GM12878 (cell line): ENCODE measurements at regions of chr9 and their contacts with region 1.

Region 1: GRCh38 chr9:37371565-37372464 is 50.7 kb upstream of the GRHPR start:
- DNase-seq: peak; percentile 63
- ATAC-seq: peak; percentile 44
- H3K4me3 ChIP-seq: no peak overlapping the region
- H3K27ac ChIP-seq: peak overlapping the region; percentile 97
- H3K4me1 ChIP-seq: peaks cover 78% of the 10 kb centered on the region
- H3K27me3 ChIP-seq: no peaks in the 10 kb centered on the region
- CTCF ChIP-seq: no peak
- EP300 ChIP-seq: peak in 1 of 2 experiments; percentile 33; a peak in 2 of 4 replicates
- POLR2A ChIP-seq: peak; percentile 7; the same call in 1 of the 2 replicates
- RAD21 ChIP-seq: no peak

Region 2: GRCh38 chr9:37085233-37085632 is 286.6 kb before region 1 on chr9:
- CTCF ChIA-PET with region 1: no interaction called
- POLR2A ChIA-PET with region 1: no interaction called
- RAD21 ChIA-PET with region 1: no interaction called
- SMC1A ChIA-PET with region 1: no interaction called
- in situ Hi-C with region 1: no loop called
- intact Hi-C with region 1: no loop called
- DNase-seq: no peak
- ATAC-seq: no peak; the same call in 2 of the 3 replicates
- H3K4me3 ChIP-seq: peak overlapping the region; percentile 14
- H3K27ac ChIP-seq: no peak overlapping the region
- H3K4me1 ChIP-seq: peaks cover 7% of the 10 kb centered on the region; the same call in 1 of the 2 replicates
- H3K27me3 ChIP-seq: no peaks in the 10 kb centered on the region
- CTCF ChIP-seq: no peak
- EP300 ChIP-seq: no peak
- POLR2A ChIP-seq: no peak
- RAD21 ChIP-seq: no peak

Region 3: DNA sequence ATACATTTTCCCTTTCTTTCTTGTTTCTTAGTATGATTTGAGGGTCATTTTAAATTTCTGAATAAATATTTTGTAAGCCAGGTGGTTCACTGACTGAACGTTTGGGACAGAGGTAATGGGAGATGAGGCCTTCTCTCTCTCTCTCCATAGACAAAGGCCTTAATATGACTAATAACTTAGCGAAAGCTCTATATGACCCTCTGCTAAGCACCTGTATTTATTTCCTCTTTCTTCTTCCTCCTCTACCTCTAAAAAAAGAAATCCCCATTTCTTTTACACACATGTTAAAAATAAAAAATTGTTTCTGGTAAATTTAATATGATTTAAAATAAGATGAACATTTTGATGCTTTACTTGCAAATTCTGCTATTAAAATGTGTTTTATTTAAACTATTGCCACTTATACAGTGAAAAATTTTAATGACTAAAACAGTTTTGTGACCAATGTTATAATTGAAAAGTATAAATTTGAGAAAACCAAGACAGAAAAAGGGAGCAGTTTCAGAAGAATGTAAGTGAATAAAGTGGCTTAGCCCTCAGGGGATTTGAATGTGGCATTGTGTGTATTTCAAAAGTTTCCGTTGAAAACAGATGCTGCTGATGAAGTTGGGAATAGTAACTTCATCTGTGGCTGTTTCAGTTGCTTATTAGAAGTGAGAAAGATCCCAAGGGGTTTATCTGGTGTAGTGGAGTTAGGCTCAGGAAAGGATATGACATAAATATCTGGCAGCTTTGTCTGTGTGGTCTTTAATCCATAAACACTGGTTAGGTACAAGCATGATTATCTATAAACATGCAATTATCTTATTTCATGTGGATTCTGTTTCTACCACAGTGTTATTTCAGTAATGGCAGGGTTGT is 77.9 kb before region 1 on chr9:
- CTCF ChIA-PET with region 1: interaction called, 4 read pairs
- POLR2A ChIA-PET with region 1: interaction called, 3 read pairs
- RAD21 ChIA-PET with region 1: no interaction called
- SMC1A ChIA-PET with region 1: interaction called, 13 read pairs
- in situ Hi-C with region 1: no loop called
- intact Hi-C with region 1: loop called (anchors 2 kb)
- DNase-seq: peak; percentile 91
- ATAC-seq: peak; percentile 73
- H3K4me3 ChIP-seq: no peak overlapping the region
- H3K27ac ChIP-seq: peak overlapping the region; percentile 90
- H3K4me1 ChIP-seq: peaks cover 60% of the 10 kb centered on the region
- H3K27me3 ChIP-seq: no peaks in the 10 kb centered on the region
- CTCF ChIP-seq: no peak
- EP300 ChIP-seq: peak; percentile 95 to 96
- POLR2A ChIP-seq: no peak
- RAD21 ChIP-seq: no peak

Region 4: DNA sequence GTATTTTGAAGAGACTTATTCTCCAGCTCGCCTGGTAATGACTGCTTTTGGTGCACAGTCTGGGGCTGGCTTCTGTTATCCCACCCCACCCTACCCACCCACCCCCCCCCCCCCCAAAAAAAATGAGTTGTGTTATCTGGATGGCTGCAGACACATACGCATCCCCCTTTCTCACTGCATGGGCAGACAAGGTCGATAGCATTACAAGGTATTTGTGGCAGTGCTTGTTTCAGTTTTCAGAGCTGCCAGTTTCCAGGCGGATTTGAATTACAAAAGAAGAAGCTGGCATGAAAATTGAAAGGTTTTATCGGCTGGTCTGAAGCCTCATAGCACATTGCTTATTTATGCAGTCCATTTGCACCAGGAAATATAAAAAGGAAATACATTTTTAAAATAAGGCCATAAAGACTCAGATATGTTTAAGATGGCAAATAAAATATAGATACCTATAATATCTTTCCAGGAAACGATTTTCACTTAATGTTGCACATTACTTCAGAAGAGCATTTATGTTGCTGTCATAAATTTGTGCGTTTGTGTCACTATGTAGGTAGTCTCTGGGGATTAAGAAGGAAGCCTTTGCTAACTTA is 34.4 kb before region 1 on chr9:
- CTCF ChIA-PET with region 1: interaction called, 6 read pairs
- POLR2A ChIA-PET with region 1: interaction called, 14 read pairs
- RAD21 ChIA-PET with region 1: interaction called, 10 read pairs
- SMC1A ChIA-PET with region 1: interaction called, 25 read pairs
- in situ Hi-C with region 1: no loop called
- intact Hi-C with region 1: no loop called
- DNase-seq: no peak
- ATAC-seq: peak; percentile 47
- H3K4me3 ChIP-seq: no peak overlapping the region; the same call in 1 of the 2 replicates
- H3K27ac ChIP-seq: peak overlapping the region; percentile 21
- H3K4me1 ChIP-seq: peaks cover 34% of the 10 kb centered on the region
- H3K27me3 ChIP-seq: no peaks in the 10 kb centered on the region
- CTCF ChIP-seq: no peak
- EP300 ChIP-seq: no peak
- POLR2A ChIP-seq: no peak
- RAD21 ChIP-seq: no peak

Region 5: GRCh38 chr9:37343730-37344129 is 28.1 kb before region 1 on chr9:
- CTCF ChIA-PET with region 1: interaction called, 6 read pairs
- POLR2A ChIA-PET with region 1: interaction called, 14 read pairs
- RAD21 ChIA-PET with region 1: interaction called, 9 read pairs
- SMC1A ChIA-PET with region 1: interaction called, 25 read pairs
- in situ Hi-C with region 1: no loop called
- intact Hi-C with region 1: no loop called
- DNase-seq: no peak
- ATAC-seq: no peak
- H3K4me3 ChIP-seq: no peak overlapping the region
- H3K27ac ChIP-seq: no peak overlapping the region
- H3K4me1 ChIP-seq: peaks cover 30% of the 10 kb centered on the region
- H3K27me3 ChIP-seq: no peaks in the 10 kb centered on the region
- CTCF ChIP-seq: no peak
- EP300 ChIP-seq: no peak
- POLR2A ChIP-seq: no peak
- RAD21 ChIP-seq: no peak

Region 6: GRCh38 chr9:37350486-37351190 is 21.2 kb before region 1 on chr9:
- CTCF ChIA-PET with region 1: interaction called, 4 read pairs
- POLR2A ChIA-PET with region 1: interaction called, 5 read pairs
- RAD21 ChIA-PET with region 1: interaction called, 7 read pairs
- SMC1A ChIA-PET with region 1: interaction called, 39 read pairs
- in situ Hi-C with region 1: no loop called
- intact Hi-C with region 1: no loop called
- DNase-seq: no peak
- ATAC-seq: no peak
- H3K4me3 ChIP-seq: no peak overlapping the region
- H3K27ac ChIP-seq: no peak overlapping the region
- H3K4me1 ChIP-seq: no peaks in the 10 kb centered on the region
- H3K27me3 ChIP-seq: no peaks in the 10 kb centered on the region
- CTCF ChIP-seq: no peak
- EP300 ChIP-seq: no peak
- POLR2A ChIP-seq: no peak
- RAD21 ChIP-seq: no peak

Region 7: GRCh38 chr9:37382161-37382981 is 10.6 kb after region 1 on chr9:
- CTCF ChIA-PET with region 1: interaction called, 23 read pairs
- POLR2A ChIA-PET with region 1: interaction called, 46 read pairs
- RAD21 ChIA-PET with region 1: interaction called, 14 read pairs
- SMC1A ChIA-PET with region 1: interaction called, 40 read pairs
- in situ Hi-C with region 1: no loop called
- intact Hi-C with region 1: loop called (anchors 1 kb)
- DNase-seq: peak; percentile 70
- ATAC-seq: peak; percentile 57
- H3K4me3 ChIP-seq: no peak overlapping the region
- H3K27ac ChIP-seq: peak overlapping the region; percentile 92
- H3K4me1 ChIP-seq: peaks cover 65% of the 10 kb centered on the region
- H3K27me3 ChIP-seq: no peaks in the 10 kb centered on the region
- CTCF ChIP-seq: no peak
- EP300 ChIP-seq: peak; percentile 75 to 80
- POLR2A ChIP-seq: no peak
- RAD21 ChIP-seq: peak; percentile 9; the same call in 1 of the 2 replicates

Region 8: DNA sequence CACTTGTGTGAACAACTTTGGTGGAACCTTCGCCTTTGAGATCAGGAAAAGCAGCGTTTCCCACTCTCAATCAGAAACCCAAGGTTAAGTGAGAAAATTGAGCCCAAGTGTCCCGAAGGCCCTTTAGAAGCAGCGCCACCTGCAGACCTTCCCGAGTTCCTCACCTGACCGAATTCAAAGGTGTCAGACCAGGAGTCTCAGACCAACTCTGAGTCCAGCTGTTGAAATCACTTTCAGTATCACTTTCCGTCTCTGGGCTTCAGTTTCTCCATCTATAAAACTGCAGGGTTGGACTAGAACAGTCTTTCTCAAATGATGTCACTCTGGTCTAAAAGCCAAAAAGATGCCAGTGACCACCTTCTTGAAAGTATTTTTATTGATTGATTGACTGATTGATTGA is 18.9 kb after region 1 on chr9:
- CTCF ChIA-PET with region 1: interaction called, 32 read pairs
- POLR2A ChIA-PET with region 1: interaction called, 5 read pairs
- RAD21 ChIA-PET with region 1: interaction called, 4 read pairs
- SMC1A ChIA-PET with region 1: interaction called, 11 read pairs
- in situ Hi-C with region 1: no loop called
- intact Hi-C with region 1: loop called (anchors 1 kb)
- DNase-seq: peak; percentile 89
- ATAC-seq: peak; percentile 95
- H3K4me3 ChIP-seq: no peak overlapping the region
- H3K27ac ChIP-seq: peak overlapping the region; percentile 68
- H3K4me1 ChIP-seq: peaks cover 18% of the 10 kb centered on the region
- H3K27me3 ChIP-seq: no peaks in the 10 kb centered on the region
- CTCF ChIP-seq: peak; percentile 76 to 90 (median 77)
- EP300 ChIP-seq: no peak
- POLR2A ChIP-seq: no peak
- RAD21 ChIP-seq: peak; percentile 83

Region 9: GRCh38 chr9:37511016-37512010 is 139.5 kb after region 1 on chr9:
- CTCF ChIA-PET with region 1: no interaction called
- POLR2A ChIA-PET with region 1: no interaction called
- RAD21 ChIA-PET with region 1: no interaction called
- SMC1A ChIA-PET with region 1: no interaction called
- in situ Hi-C with region 1: no loop called
- intact Hi-C with region 1: no loop called
- DNase-seq: no peak
- ATAC-seq: peak; percentile 90
- H3K4me3 ChIP-seq: no peak overlapping the region
- H3K27ac ChIP-seq: no peak overlapping the region
- H3K4me1 ChIP-seq: no peaks in the 10 kb centered on the region
- H3K27me3 ChIP-seq: no peaks in the 10 kb centered on the region
- CTCF ChIP-seq: peak; percentile 26 to 44 (median 35); a peak in 4 of 6 replicates
- EP300 ChIP-seq: no peak
- POLR2A ChIP-seq: peak; percentile 58; the same call in 1 of the 2 replicates
- RAD21 ChIP-seq: 0 out of 2 replicates have a peak, but pooled peaks have one; percentile 27